SK-N-SH (cell line): ENCODE measurements at regions of chr3 and their contacts with region 1.

Region 1: GRCh38 chr3:150408221-150409102 is at the start of gene TSC22D2:
- DNase-seq: peak; percentile 92
- H3K4me3 ChIP-seq: peak within 1 kb of the TSS; percentile 87 to 91
- H3K27ac ChIP-seq: peak within 1 kb of the TSS; percentile 96 to 97
- H3K4me1 ChIP-seq: no peaks in the 10 kb centered on the region; a peak in 2 of 4 replicates
- H3K27me3 ChIP-seq: no peaks in the 10 kb centered on the region
- CTCF ChIP-seq: peak; percentile 34
- EP300 ChIP-seq: peak in 1 of 2 experiments; percentile 34; a peak in 1 of 4 replicates
- RAD21 ChIP-seq: no peak; the same call in 1 of the 2 replicates
- polyA plus RNA-seq, gene TSC22D2: 4.4 and 4.8 TPM in 2 replicates

Region 2: GRCh38 chr3:150268426-150269391 is 139.8 kb before region 1 on chr3:
- CTCF ChIA-PET with region 1: no interaction called
- POLR2A ChIA-PET with region 1: no interaction called
- DNase-seq: no peak
- H3K4me3 ChIP-seq: no peak overlapping the region
- H3K27ac ChIP-seq: no peak overlapping the region
- H3K4me1 ChIP-seq: no peaks in the 10 kb centered on the region; a peak in 1 of 4 replicates
- H3K27me3 ChIP-seq: no peaks in the 10 kb centered on the region
- CTCF ChIP-seq: no peak
- EP300 ChIP-seq: no peak
- RAD21 ChIP-seq: no peak

Region 3: GRCh38 chr3:150423761-150424160 is 15.3 kb after region 1 on chr3:
- CTCF ChIA-PET with region 1: interaction called, 14 read pairs
- POLR2A ChIA-PET with region 1: interaction called, 3 read pairs
- DNase-seq: no peak
- H3K4me3 ChIP-seq: no peak overlapping the region
- H3K27ac ChIP-seq: no peak overlapping the region
- H3K4me1 ChIP-seq: peaks cover 0 to 35% of the 10 kb centered on the region in 2 experiments; a peak in 2 of 4 replicates
- H3K27me3 ChIP-seq: no peaks in the 10 kb centered on the region
- CTCF ChIP-seq: no peak
- EP300 ChIP-seq: no peak
- RAD21 ChIP-seq: no peak

Region 4: DNA sequence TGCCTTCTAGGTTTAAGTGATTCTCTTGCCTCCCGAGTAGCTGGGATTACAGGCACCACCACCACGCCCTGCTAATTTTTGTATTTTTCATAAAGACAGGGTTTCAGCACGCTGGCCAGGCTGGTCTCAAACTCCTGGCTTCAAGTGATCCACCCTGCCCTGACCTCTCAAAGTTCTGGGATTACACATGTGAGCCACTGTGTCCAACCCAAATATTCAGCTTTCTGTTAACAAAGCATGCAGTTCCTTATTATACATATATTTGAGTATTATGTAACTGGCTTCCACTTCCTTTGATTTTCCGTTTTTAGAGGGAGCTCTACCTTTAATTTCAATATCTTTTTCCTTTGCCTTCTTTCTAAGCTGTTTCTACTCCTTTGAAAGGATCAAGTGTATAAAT is 25.8 kb after region 1 on chr3:
- CTCF ChIA-PET with region 1: interaction called, 13 read pairs
- POLR2A ChIA-PET with region 1: no interaction called
- DNase-seq: no peak
- H3K4me3 ChIP-seq: no peak overlapping the region
- H3K27ac ChIP-seq: no peak overlapping the region
- H3K4me1 ChIP-seq: peaks cover 0 to 2% of the 10 kb centered on the region in 2 experiments; a peak in 1 of 4 replicates
- H3K27me3 ChIP-seq: no peaks in the 10 kb centered on the region
- CTCF ChIP-seq: no peak
- EP300 ChIP-seq: no peak
- RAD21 ChIP-seq: no peak